ENCODE measurements at regions of chr11 and their contacts with region 1.

Region 1: GRCh38 chr11:65652511-65653231 is 10.0 kb downstream of the RELA start:
- DNase-seq: peak; percentile 95 to 97 (median 97)
- H3K4me3 ChIP-seq: peak overlapping the region; percentile 73
- H3K4me3 Mint-ChIP-seq: peak overlapping the region; percentile 82 to 93 (median 86)
- H3K27ac ChIP-seq: peak overlapping the region; percentile 97
- H3K27ac Mint-ChIP-seq: peak overlapping the region; percentile 89 to 100 (median 97)
- H3K4me1 ChIP-seq: peaks cover 31% of the 10 kb centered on the region
- H3K4me1 Mint-ChIP-seq: peaks cover 54 to 64% (median 54%) of the 10 kb centered on the region in 3 donors
- H3K27me3 ChIP-seq: no peaks in the 10 kb centered on the region
- H3K27me3 Mint-ChIP-seq: peaks cover 0 to 8% of the 10 kb centered on the region in 2 donors

Region 2: GRCh38 chr11:65225279-65226102 is 427.2 kb before region 1 on chr11:
- CTCF ChIA-PET with region 1: no interaction called
- POLR2A ChIA-PET with region 1: no interaction called
- DNase-seq: peak; percentile 42 to 73 (median 46)
- H3K4me3 ChIP-seq: peak overlapping the region; percentile 48
- H3K4me3 Mint-ChIP-seq: peak overlapping the region; percentile 64 to 87 (median 68)
- H3K27ac ChIP-seq: peak overlapping the region; percentile 65
- H3K27ac Mint-ChIP-seq: peak overlapping the region in 1 of 8 donors; percentile 76
- H3K4me1 ChIP-seq: peaks cover 7% of the 10 kb centered on the region
- H3K4me1 Mint-ChIP-seq: peaks cover 7 to 16% (median 12%) of the 10 kb centered on the region in 3 donors
- H3K27me3 ChIP-seq: no peaks in the 10 kb centered on the region
- H3K27me3 Mint-ChIP-seq: peaks cover 22 to 27% of the 10 kb centered on the region in 2 donors

Region 3: GRCh38 chr11:65524741-65525545 is 127.7 kb before region 1 on chr11 and contains the start of gene SCYL1:
- CTCF ChIA-PET with region 1: no interaction called
- POLR2A ChIA-PET with region 1: no interaction called
- DNase-seq: peak; percentile 72 to 88 (median 76)
- H3K4me3 ChIP-seq: peak within 1 kb of the TSS; percentile 75
- H3K4me3 Mint-ChIP-seq: peak within 1 kb of the TSS; percentile 81 to 91 (median 85)
- H3K27ac ChIP-seq: peak within 1 kb of the TSS; percentile 76
- H3K27ac Mint-ChIP-seq: peak within 1 kb of the TSS; percentile 73 to 97 (median 92)
- H3K4me1 ChIP-seq: peaks cover 52% of the 10 kb centered on the region
- H3K4me1 Mint-ChIP-seq: peaks cover 45 to 62% (median 46%) of the 10 kb centered on the region in 3 donors
- H3K27me3 ChIP-seq: no peaks in the 10 kb centered on the region
- H3K27me3 Mint-ChIP-seq: peaks cover 0 to 1% of the 10 kb centered on the region in 2 donors
- total RNA-seq, gene SCYL1: 85.1 to 88.5 TPM

Region 4: DNA sequence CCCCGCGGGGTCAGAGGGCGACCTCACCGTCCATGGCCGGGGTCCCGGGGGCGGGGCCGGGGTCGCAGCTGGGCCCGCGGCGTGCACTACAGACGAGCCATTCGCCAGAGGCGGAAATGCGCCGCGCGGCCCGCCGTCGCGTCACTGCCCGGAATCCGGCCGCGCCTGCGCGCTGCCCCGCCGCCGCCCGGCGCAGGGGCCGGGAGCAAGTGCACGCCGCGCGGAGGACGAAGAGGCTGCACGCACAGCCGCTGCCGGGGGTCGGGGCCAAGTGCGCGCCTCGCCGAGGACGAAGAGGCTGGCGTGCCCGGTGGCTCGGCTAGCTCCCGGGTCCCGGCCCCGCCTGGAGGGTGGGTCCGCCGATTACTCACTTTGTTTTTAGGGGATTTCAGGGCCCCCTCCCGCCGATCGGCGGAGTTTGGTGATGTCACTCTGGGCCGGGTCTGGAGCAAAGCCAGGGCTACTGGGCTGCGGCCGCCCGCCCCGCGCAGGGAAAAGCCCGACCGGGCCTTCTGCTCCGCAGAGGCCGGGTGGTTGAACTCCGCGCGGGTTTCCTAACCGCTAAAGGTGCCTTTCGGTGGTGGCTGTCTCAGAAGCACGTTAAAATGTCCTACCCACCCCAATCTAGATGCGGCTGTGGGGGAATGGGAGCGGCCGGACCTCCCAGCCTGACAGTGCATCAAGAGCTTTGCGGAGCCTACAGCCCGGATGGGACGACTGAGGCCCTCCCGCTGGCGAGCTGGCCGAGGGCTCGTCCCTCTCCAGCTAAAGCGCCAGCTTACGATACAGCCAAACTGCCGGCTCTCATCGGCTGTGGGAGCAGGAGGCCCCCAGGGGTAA is 10.3 kb after region 1 on chr11 and contains the start of gene RELA:
- CTCF ChIA-PET with region 1: interaction called, 5 read pairs
- POLR2A ChIA-PET with region 1: interaction called, 46 read pairs
- DNase-seq: peak; percentile 83 to 96 (median 88)
- H3K4me3 ChIP-seq: peak within 1 kb of the TSS; percentile 97
- H3K4me3 Mint-ChIP-seq: peak within 1 kb of the TSS; percentile 88 to 97 (median 90)
- H3K27ac ChIP-seq: peak within 1 kb of the TSS; percentile 97
- H3K27ac Mint-ChIP-seq: peak within 1 kb of the TSS; percentile 92 to 99 (median 98)
- H3K4me1 ChIP-seq: peaks cover 22% of the 10 kb centered on the region
- H3K4me1 Mint-ChIP-seq: peaks cover 30 to 50% (median 30%) of the 10 kb centered on the region in 3 donors
- H3K27me3 ChIP-seq: no peaks in the 10 kb centered on the region
- H3K27me3 Mint-ChIP-seq: no peaks in the 10 kb centered on the region
- total RNA-seq, gene RELA: 87.3 to 89.7 TPM

Region 5: GRCh38 chr11:65779851-65780577 is 127.3 kb after region 1 on chr11:
- CTCF ChIA-PET with region 1: no interaction called
- POLR2A ChIA-PET with region 1: no interaction called
- DNase-seq: peak; percentile 66 to 83 (median 75)
- H3K4me3 ChIP-seq: peak overlapping the region; percentile 76
- H3K4me3 Mint-ChIP-seq: peak overlapping the region; percentile 68 to 92 (median 84)
- H3K27ac ChIP-seq: peak overlapping the region; percentile 64
- H3K27ac Mint-ChIP-seq: peak overlapping the region in 7 of 8 donors; percentile 23 to 87 (median 61)
- H3K4me1 ChIP-seq: peaks cover 12% of the 10 kb centered on the region
- H3K4me1 Mint-ChIP-seq: peaks cover 1 to 35% (median 6%) of the 10 kb centered on the region in 3 donors
- H3K27me3 ChIP-seq: no peaks in the 10 kb centered on the region
- H3K27me3 Mint-ChIP-seq: no peaks in the 10 kb centered on the region

Region 6: DNA sequence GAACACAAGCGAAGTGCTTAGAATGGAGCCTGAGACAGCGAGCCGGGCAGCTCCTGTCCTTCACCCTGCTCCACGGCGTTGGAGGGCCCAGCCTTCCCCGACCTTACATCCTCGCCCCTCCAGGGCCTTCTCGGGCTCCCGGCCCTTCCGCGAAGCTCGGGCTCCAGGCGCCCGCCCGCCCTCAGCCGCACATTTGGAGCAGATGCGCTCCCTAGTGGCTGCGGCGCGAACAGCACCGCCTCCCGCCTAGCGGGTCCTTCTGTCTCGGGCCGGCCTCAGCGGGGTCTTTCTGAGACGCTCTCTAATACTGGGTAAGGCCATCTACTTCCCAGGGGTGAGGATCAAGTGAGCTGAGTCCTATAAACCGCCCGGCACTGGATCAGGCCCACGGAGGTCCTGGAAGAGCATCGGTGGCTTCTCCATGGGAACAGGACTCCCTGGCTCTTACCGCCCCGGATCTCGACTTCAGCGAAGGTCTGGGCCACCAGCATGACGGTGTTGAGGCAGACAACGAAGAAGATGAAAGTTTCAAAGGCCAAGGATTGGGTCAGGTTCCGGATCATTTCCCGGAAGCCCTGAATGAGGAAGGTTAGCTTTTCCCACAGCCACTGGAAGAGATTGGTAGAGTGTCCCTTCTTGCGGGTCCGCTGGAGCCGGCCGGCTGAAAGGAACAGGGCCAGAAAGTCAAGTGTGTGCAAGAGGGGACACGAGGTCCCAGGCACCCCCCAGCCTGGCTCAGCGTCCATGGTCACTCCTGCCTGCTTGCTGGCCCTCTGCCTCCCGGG is 369.9 kb after region 1 on chr11:
- CTCF ChIA-PET with region 1: no interaction called
- POLR2A ChIA-PET with region 1: no interaction called
- DNase-seq: peak; percentile 63 to 80 (median 71)
- H3K4me3 ChIP-seq: no peak overlapping the region
- H3K4me3 Mint-ChIP-seq: peak overlapping the region in 5 of 7 donors; percentile 27 to 51 (median 28)
- H3K27ac ChIP-seq: no peak overlapping the region
- H3K27ac Mint-ChIP-seq: no peak overlapping the region
- H3K4me1 ChIP-seq: peaks cover 7% of the 10 kb centered on the region
- H3K4me1 Mint-ChIP-seq: peaks cover 5 to 9% (median 6%) of the 10 kb centered on the region in 3 donors
- H3K27me3 ChIP-seq: no peaks in the 10 kb centered on the region
- H3K27me3 Mint-ChIP-seq: peaks cover 3 to 8% of the 10 kb centered on the region in 2 donors